ENCODE measurements at regions of chr5 and their contacts with region 1.

Region 1: GRCh38 chr5:173615884-173616576 is 420 bp downstream of the BOD1 start:
- DNase-seq: peak; percentile 63
- ATAC-seq: peak; percentile 71

Region 2: DNA sequence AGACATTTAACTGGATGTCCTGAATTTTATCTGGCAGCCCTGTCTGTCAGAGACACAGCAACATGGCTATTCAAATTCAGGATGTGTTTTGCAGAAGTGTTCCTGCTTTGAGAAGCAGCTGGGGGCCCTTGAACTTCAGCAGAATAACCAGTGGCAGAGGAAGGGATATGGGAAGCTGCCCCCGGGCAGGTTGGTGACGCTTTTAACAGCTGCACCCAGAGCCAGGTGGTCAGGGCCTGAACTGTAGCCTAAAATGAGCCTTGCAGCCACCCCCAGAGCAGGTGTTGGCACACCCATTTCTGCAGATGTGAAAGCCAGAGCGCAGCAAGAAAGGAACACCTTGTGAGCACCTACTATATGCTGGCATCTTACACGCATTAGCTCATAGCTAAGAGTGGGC is 129.1 kb after region 1 on chr5:
- intact Hi-C with region 1: no loop called
- DNase-seq: no peak
- ATAC-seq: no peak

Region 3: DNA sequence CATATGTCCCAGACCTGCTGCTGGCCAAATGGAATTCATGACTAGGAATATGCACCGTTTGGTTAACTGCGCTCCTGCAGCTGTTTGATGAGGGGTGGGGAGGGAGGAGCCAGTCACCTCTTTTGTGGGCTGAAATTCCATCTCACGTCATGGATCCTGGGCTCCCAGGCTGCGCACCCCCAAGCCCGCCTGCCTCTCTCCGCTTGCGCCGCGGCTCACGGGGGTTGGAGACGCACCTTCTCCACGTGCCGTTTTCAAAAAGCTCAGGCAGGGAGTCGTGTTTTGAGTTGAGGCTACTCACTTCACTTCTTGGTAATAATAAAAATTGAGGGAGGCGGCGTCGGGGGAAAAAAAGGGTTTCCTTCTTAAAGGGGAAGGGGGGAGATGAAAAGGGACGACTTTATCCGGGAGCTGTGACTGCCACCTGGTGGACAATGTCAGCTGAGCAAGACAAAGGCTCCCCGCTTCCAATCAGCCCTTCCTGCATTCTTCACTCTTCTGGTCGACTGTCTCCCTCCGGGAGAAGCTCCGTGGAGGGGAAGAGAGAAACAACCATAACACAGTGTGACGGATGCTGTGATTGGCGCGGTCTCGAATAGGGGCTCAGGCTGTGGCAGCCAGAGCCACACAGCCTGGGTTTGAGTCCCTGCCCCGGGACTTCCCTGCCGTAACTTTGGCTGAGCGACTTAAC is 357.0 kb after region 1 on chr5:
- intact Hi-C with region 1: loop called (anchors 5 kb)
- DNase-seq: peak; percentile 85
- ATAC-seq: peak; percentile 84

Region 4: DNA sequence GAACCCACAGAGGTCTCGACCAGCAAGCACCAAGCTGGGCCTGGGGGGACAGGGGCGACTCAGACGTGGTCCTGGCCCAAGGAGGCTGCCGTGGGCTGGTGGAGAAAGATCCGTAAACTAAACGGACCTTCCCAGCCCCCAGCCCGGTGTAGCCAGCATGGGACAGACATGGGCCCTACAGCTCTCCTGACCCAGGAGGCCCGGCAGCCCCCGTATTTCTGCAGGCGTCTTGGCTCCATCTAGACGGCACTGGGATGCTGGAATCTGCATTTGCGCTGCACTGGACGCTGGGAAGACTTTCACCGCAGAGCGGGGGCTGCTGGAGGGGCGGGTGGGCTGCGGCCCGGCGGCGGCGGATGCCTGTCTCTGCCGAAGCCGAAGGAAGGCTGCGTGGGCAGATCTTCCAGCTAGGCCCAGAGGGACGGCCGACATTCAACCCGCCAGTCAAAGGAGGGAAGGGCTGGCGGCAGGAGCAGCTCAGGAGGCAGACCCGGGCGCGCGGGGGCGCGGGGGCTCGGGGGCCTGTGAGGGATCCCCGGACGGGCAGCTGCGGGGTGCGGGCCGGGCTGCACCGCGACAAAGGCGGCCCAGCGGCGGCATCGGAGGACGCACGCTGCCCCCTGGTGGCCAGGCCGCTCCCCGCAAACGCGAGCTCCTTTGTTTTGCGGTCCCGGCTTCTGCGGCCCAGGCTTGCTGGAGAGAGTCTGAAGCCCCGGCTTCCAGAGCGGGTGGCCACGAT is 695.7 kb after region 1 on chr5:
- intact Hi-C with region 1: loop called (anchors 10 kb)
- DNase-seq: peak; percentile 86
- ATAC-seq: peak; percentile 87